Activated CD4-positive, alpha-beta T cell treated with anti-CD3 and anti-CD28 coated beads for 36 hours (primary cell): ENCODE measurements at regions of chr6 and their contacts with region 1.

Region 1: DNA sequence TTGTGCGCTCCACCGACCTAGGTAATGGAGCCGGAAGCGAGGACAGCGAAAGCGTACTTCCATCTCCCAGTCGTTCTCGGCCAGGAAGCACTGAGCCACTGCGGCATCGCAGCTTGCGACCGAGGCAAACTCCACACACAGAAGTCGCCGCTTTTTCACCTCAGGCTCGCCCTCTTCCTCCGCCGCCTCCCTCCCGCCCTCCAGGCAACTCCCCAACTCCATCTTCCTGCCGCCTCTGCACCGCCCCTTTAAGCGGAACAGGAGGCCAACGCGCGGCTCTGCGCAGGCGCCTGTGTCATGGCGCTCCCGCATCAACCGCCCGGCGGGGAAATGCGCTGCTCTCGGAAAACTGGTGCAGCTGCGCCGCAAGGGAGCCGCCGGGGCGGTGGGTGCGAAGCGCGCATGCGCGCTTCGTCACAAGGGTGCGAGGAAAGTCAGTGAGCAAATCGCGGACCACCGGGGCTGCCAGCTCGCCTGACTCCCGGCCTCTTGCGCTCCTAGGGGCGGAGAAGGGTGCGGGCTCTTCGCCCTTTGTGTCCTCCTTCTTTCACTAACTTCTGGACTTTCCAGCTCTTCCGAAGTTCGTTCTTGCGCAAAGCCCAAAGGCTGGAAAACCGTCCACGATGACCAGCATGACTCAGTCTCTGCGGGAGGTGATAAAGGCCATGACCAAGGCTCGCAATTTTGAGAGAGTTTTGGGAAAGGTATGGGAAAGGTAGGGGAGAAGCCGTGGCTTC is at the starts of genes ACOT13 and TDP2:
- DNase-seq: peak; percentile 97
- ATAC-seq: peak; percentile 97
- H3K4me3 Mint-ChIP-seq: peak within 1 kb of the TSS; percentile 90
- H3K27ac Mint-ChIP-seq: peak within 1 kb of the TSS; percentile 99
- H3K4me1 Mint-ChIP-seq: peaks cover 42% of the 10 kb centered on the region
- H3K27me3 Mint-ChIP-seq: no peaks in the 10 kb centered on the region
- total RNA-seq, gene ACOT13: 37.3 to 47.9 TPM
- total RNA-seq, gene TDP2: 41.4 to 45.4 TPM

Region 2: GRCh38 chr6:24494821-24495795 is 171.7 kb before region 1 on chr6 and contains the start of gene ALDH5A1:
- CTCF ChIA-PET with region 1: no interaction called
- POLR2A ChIA-PET with region 1: no interaction called
- intact Hi-C with region 1: loop called in 1 of 2 experiments (anchors 1 kb)
- DNase-seq: peak; percentile 92
- ATAC-seq: peak; percentile 84
- H3K4me3 Mint-ChIP-seq: peak within 1 kb of the TSS; percentile 77
- H3K27ac Mint-ChIP-seq: peak within 1 kb of the TSS; percentile 76
- H3K4me1 Mint-ChIP-seq: peaks cover 14% of the 10 kb centered on the region
- H3K27me3 Mint-ChIP-seq: no peaks in the 10 kb centered on the region
- total RNA-seq, gene ALDH5A1: 16.5 to 18.8 TPM

Region 3: GRCh38 chr6:24699521-24700359 is 32.9 kb after region 1 on chr6:
- CTCF ChIA-PET with region 1: interaction called, 5 read pairs
- POLR2A ChIA-PET with region 1: no interaction called
- intact Hi-C with region 1: loop called in 1 of 2 experiments (anchors 5 kb)
- DNase-seq: no peak
- ATAC-seq: peak; percentile 89
- H3K4me3 Mint-ChIP-seq: no peak overlapping the region
- H3K27ac Mint-ChIP-seq: peak overlapping the region; percentile 89
- H3K4me1 Mint-ChIP-seq: peaks cover 68% of the 10 kb centered on the region
- H3K27me3 Mint-ChIP-seq: no peaks in the 10 kb centered on the region

Region 4: GRCh38 chr6:24774696-24775519 is 108.1 kb after region 1 on chr6 and contains the start of gene GMNN:
- CTCF ChIA-PET with region 1: interaction called, 6 read pairs
- POLR2A ChIA-PET with region 1: no interaction called
- intact Hi-C with region 1: loop called in 1 of 2 experiments (anchors 1 kb)
- DNase-seq: peak; percentile 99
- ATAC-seq: peak; percentile 93
- H3K4me3 Mint-ChIP-seq: peak within 1 kb of the TSS; percentile 98
- H3K27ac Mint-ChIP-seq: peak within 1 kb of the TSS; percentile 99
- H3K4me1 Mint-ChIP-seq: peaks cover 26% of the 10 kb centered on the region
- H3K27me3 Mint-ChIP-seq: no peaks in the 10 kb centered on the region
- total RNA-seq, gene GMNN: 74.0 to 76.1 TPM